ENCODE measurements at regions of chr1 and their contacts with region 1.

Region 1: DNA sequence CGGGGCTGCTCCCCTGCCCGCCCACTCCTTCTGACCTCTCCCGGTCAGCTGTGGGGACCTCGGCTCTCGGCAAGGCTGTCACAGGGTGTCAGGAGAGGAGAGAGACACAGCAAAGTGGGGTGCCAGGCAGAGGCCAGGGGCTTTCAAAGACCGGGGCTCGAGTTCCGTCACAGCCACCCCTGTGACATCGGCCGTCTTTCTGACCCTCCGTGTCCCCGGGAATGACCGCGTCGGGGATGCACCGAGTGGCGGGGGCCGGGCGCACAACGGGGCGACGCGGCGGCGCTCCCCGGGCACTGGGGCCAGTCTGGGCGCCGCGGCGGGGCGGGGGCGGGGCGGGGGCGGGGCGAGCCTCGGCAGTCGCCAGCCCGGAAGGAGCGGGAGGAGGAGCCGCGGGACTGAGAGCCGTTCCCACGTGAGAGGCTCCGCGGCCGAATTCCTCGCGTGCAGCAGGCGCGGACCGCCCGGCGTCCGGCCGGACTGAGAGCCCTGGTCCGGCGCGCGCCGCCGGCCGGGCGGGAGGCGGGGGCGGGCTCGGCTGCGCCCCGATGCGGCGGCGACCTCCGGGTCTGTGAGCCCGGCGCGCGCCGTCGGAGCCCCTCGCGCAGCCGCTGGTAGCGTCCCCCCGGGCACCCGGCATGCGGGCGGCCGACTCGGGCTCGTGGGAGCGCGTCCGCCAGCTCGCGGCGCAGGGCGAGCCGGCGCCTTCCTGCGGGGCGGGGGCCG is 229.7 kb upstream of the TMEM51 start:
- DNase-seq: peak in 9 of 10 donors; percentile 49 to 95 (median 69)

Region 2: DNA sequence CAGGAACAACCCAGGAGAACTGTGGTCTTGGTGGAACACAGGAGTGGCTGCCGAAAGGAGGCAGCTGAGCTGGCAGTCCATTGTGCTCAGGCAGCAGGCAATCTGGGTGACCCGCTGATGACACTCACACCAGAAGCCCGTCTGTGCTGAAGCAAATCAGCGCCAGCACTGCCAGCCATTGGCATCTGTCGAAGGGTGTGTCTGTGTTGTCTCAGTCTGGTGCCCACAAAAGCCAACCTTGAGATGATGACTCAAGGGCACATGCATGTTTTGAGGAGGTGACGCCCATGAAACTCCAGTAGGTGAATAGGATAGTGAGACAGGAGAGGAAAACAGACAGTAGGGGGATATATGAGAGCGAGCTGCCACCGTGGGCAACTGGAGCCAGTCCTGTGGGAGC is 158.1 kb before region 1 on chr1:
- intact Hi-C with region 1: no loop called
- DNase-seq: no peak

Region 3: DNA sequence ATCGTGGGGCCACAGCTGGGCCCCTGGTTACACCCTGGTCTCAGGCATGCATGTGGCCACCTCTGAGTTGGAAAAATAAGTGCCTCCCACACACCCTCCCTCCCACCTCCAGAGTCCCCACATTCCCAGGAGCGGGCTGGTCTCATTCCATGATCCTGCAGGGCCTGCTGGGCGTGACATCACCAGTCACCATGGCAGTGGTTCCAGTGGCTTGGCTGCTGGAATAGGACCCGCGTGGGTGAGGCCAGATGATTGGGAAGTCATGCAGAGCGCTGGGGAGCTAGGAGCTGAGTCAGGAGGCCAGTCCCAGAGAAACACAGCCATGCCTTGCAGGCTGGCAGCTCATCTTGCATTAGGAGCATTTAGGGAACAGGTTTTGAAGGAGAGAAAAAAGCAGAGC is 104.2 kb after region 1 on chr1:
- intact Hi-C with region 1: loop called (anchors 1 kb)
- DNase-seq: peak; percentile 37 to 93 (median 55)